ENCODE measurements at regions of chr7 and their contacts with region 1.

Region 1: GRCh38 chr7:114663502-114663901 is 248.9 kb downstream of the FOXP2 start:
- DNase-seq: peak in 1 of 2 experiments; percentile 2
- H3K4me3 ChIP-seq: no peak overlapping the region
- H3K27ac ChIP-seq: no peak overlapping the region
- H3K4me1 ChIP-seq: no peaks in the 10 kb centered on the region
- H3K27me3 ChIP-seq: no peaks in the 10 kb centered on the region
- CTCF ChIP-seq: peak; percentile 37; the same call in 1 of the 2 replicates

Region 2: GRCh38 chr7:114426382-114427223 is 236.9 kb before region 1 on chr7:
- CTCF ChIA-PET with region 1: interaction called, 7 read pairs
- POLR2A ChIA-PET with region 1: interaction called, 4 read pairs
- intact Hi-C with region 1: loop called (anchors 10 kb)
- DNase-seq: no peak
- H3K4me3 ChIP-seq: no peak overlapping the region
- H3K27ac ChIP-seq: no peak overlapping the region
- H3K4me1 ChIP-seq: no peaks in the 10 kb centered on the region
- H3K27me3 ChIP-seq: no peaks in the 10 kb centered on the region
- CTCF ChIP-seq: peak; percentile 43; the same call in 1 of the 2 replicates